HEK293 (cell line): ENCODE measurements at regions of chr20 and their contacts with region 1.

Region 1: GRCh38 chr20:51966291-51966971 is 164.1 kb upstream of the SALL4 start:
- H3K4me3 ChIP-seq: no peak overlapping the region
- H3K27ac ChIP-seq: no peak overlapping the region
- H3K4me1 ChIP-seq: peaks cover 7% of the 10 kb centered on the region; the same call in 1 of the 2 replicates
- CTCF ChIP-seq: peak; percentile 48; the same call in 1 of the 2 replicates

Region 2: DNA sequence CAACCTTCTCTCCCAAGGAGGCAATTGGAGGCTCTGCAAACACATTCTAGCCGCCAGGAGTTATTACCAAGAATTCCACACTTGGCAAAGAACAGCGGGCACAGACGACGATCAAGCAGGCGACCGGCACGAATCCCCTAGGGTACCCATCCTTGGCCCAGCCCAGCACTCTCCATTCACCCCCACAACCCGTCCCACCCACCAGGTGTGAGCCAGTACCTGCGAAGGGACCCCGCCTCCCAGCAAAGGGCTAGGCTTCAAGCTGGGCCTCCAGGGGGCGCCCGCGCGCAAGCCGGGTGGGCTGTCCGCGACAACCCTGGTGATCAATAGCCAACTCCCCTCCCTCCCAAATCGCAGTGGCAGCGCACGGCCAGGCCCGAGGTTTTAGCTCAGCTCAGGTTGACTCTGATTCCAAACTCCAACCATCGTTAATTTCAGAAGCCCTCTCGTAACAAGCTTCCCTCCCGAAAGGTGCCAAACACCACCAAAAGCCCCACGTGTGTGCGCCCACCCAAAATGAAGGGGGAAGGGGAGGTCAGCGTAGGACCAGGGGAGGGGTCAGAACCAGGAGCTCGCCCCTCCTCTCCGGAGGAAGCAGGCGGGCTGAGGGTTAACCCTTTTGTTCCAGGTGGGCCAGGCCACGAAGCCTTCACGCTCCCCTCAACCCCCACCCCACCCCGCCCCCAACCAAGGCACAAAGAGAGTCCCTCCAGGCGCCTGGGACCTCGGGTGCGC is 166.2 kb before region 1 on chr20:
- CTCF ChIA-PET with region 1: interaction called, 10 read pairs
- POLR2A ChIA-PET with region 1: no interaction called
- H3K4me3 ChIP-seq: peak overlapping the region; percentile 19
- H3K27ac ChIP-seq: peak overlapping the region; percentile 22; the same call in 1 of the 2 replicates
- H3K4me1 ChIP-seq: peaks cover 22% of the 10 kb centered on the region
- CTCF ChIP-seq: peak; percentile 87

Region 3: DNA sequence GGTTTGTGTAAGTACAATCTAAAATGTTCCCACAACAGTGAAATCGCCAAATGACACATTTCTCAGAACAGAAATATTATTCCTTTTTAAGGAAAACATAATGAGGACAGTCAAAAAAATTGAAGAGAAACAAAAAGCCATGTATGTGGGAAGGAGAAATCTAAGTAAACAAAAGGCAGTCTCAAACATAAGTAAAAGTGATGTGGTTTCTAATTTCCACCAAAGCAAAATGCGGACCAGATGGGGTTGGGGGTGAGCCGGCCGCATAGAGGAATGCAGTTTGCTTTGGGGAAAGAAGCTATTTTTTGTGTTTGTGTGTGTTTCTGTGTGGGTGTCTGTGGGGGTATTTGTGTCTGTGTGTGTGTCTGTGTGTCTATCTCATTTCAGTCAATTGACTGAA is 28.6 kb after region 1 on chr20:
- CTCF ChIA-PET with region 1: no interaction called
- POLR2A ChIA-PET with region 1: no interaction called
- H3K4me3 ChIP-seq: no peak overlapping the region
- H3K27ac ChIP-seq: no peak overlapping the region
- H3K4me1 ChIP-seq: no peaks in the 10 kb centered on the region
- CTCF ChIP-seq: no peak